ENCODE measurements at regions of chr5 and their contacts with region 1.

Region 1: GRCh38 chr5:163459922-163460766 is at the starts of genes HMMR and NUDCD2:
- DNase-seq: peak; percentile 82 to 97 (median 90)
- ATAC-seq: peak; percentile 79
- H3K4me3 ChIP-seq: peak within 1 kb of the TSS; percentile 70
- H3K27ac ChIP-seq: peak within 1 kb of the TSS; percentile 100
- H3K4me1 ChIP-seq: peaks cover 8 to 9% of the 10 kb centered on the region in 2 experiments; a peak in 4 of 5 replicates
- H3K27me3 ChIP-seq: no peaks in the 10 kb centered on the region
- CTCF ChIP-seq: no peak; a peak in 1 of 6 replicates
- EP300 ChIP-seq: no peak
- POLR2A ChIP-seq: peak; percentile 90
- RAD21 ChIP-seq: peak in 1 of 2 experiments; percentile 5; a peak in 1 of 4 replicates
- polyA plus RNA-seq, gene HMMR: 81.7 to 86.0 TPM
- polyA plus RNA-seq, gene NUDCD2: 14.6 to 22.5 TPM

Region 2: DNA sequence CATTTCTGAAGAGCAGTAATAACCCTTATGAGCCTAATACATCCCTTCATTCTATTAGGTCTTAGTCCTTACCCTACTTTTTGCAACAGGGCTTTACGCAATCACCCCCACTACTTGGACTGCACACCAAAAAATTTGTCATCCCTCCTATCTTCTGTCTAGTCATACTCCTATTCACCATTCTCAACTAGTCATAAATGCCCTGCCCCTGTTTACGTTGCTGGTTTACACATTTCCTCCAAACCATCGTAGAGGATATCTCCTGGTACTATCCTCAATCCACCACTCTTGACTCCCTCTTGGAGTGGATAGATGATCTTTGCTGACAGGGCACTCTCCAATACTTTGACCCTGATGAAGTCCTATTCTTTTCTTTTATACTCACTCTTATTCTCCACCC is 121.0 kb before region 1 on chr5:
- CTCF ChIA-PET with region 1: no interaction called
- POLR2A ChIA-PET with region 1: no interaction called
- in situ Hi-C with region 1: no loop called
- intact Hi-C with region 1: no loop called
- DNase-seq: no peak
- ATAC-seq: no peak
- H3K4me3 ChIP-seq: no peak overlapping the region
- H3K27ac ChIP-seq: no peak overlapping the region
- H3K4me1 ChIP-seq: no peaks in the 10 kb centered on the region; a peak in 1 of 5 replicates
- H3K27me3 ChIP-seq: no peaks in the 10 kb centered on the region
- CTCF ChIP-seq: no peak
- EP300 ChIP-seq: no peak
- POLR2A ChIP-seq: no peak
- RAD21 ChIP-seq: no peak

Region 3: DNA sequence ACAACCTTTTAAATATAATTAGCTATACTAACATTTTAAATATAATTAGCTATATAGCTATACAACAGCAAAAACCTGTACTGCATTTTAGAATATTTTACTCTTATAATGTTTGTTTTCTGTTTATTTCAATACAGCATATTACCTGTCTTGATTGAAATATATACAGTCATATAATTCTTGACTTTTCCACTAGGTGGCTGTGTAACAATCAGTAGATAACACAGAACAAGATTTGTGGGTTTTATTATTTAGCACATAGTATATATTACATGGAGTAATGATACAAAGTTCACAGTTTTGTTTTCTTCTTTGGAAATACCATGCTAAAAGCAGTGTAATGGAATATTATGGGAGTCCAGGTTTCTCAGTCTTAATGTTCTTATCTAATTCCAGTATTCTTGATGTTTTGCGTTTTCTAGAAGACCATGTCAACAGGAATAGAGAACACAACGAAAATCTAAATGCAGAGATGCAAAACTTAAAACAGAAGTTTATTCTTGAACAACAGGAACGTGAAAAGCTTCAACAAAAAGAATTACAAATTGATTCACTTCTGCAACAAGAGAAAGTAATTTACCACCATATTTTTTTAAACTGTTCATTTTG is 13.6 kb after region 1 on chr5:
- CTCF ChIA-PET with region 1: no interaction called
- POLR2A ChIA-PET with region 1: interaction called, 30 read pairs
- in situ Hi-C with region 1: no loop called
- intact Hi-C with region 1: no loop called
- DNase-seq: no peak
- ATAC-seq: 0 out of 3 replicates have a peak, but pooled peaks have one; percentile 49
- H3K4me3 ChIP-seq: no peak overlapping the region
- H3K27ac ChIP-seq: no peak overlapping the region
- H3K4me1 ChIP-seq: no peaks in the 10 kb centered on the region
- H3K27me3 ChIP-seq: no peaks in the 10 kb centered on the region
- CTCF ChIP-seq: no peak; a peak in 1 of 6 replicates
- EP300 ChIP-seq: no peak
- POLR2A ChIP-seq: no peak
- RAD21 ChIP-seq: no peak

Region 4: GRCh38 chr5:163505368-163506094 is 45.4 kb after region 1 on chr5 and contains the start of gene MAT2B:
- CTCF ChIA-PET with region 1: no interaction called
- POLR2A ChIA-PET with region 1: interaction called, 44 read pairs
- in situ Hi-C with region 1: no loop called
- intact Hi-C with region 1: loop called (anchors 1 kb)
- DNase-seq: peak; percentile 95 to 97 (median 96)
- ATAC-seq: peak; percentile 88
- H3K4me3 ChIP-seq: peak within 1 kb of the TSS; percentile 65
- H3K27ac ChIP-seq: peak within 1 kb of the TSS; percentile 87
- H3K4me1 ChIP-seq: peaks cover 5 to 7% of the 10 kb centered on the region in 2 experiments; a peak in 3 of 5 replicates
- H3K27me3 ChIP-seq: no peaks in the 10 kb centered on the region
- CTCF ChIP-seq: peak; percentile 67 to 75 (median 69)
- EP300 ChIP-seq: no peak; the same call in 1 of the 2 replicates
- POLR2A ChIP-seq: peak; percentile 98
- RAD21 ChIP-seq: no peak
- polyA plus RNA-seq, gene MAT2B: 47.1 to 57.7 TPM

Region 5: DNA sequence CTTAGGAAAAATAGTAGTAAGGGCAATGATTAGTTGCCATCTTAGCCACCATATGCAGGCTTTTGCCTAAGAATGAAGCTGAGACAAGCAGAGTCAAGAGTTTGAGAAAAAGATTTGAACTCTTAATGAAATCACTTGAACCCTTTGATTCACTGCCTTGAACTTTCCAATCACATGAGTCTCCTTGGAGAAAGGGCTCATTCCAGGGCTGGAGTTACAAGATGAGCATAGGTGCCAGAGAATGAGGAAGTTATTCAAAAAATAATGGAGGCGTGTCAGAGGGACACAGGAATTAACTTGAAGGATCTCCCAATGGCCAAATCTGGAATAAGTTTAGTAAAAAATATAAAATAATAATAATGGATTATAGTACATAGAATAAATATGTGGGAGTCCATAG is 80.6 kb after region 1 on chr5:
- CTCF ChIA-PET with region 1: no interaction called
- POLR2A ChIA-PET with region 1: no interaction called
- in situ Hi-C with region 1: no loop called
- intact Hi-C with region 1: no loop called
- DNase-seq: no peak
- ATAC-seq: no peak
- H3K4me3 ChIP-seq: no peak overlapping the region
- H3K27ac ChIP-seq: no peak overlapping the region
- H3K4me1 ChIP-seq: no peaks in the 10 kb centered on the region
- H3K27me3 ChIP-seq: no peaks in the 10 kb centered on the region; a peak in 1 of 5 replicates
- CTCF ChIP-seq: no peak
- EP300 ChIP-seq: no peak
- POLR2A ChIP-seq: no peak
- RAD21 ChIP-seq: no peak

Region 6: GRCh38 chr5:165349735-165350134 is 1889.6 kb after region 1 on chr5:
- CTCF ChIA-PET with region 1: no interaction called
- POLR2A ChIA-PET with region 1: no interaction called
- in situ Hi-C with region 1: no loop called
- intact Hi-C with region 1: no loop called
- DNase-seq: no peak
- ATAC-seq: no peak
- H3K4me3 ChIP-seq: no peak overlapping the region
- H3K27ac ChIP-seq: no peak overlapping the region
- H3K4me1 ChIP-seq: no peaks in the 10 kb centered on the region
- H3K27me3 ChIP-seq: no peaks in the 10 kb centered on the region
- CTCF ChIP-seq: no peak
- EP300 ChIP-seq: no peak
- POLR2A ChIP-seq: no peak
- RAD21 ChIP-seq: no peak